ENCODE measurements at regions of chr13 and their contacts with region 1.

Region 1: GRCh38 chr13:47555235-47555634 is 445.8 kb downstream of the SUCLA2 start:
- DNase-seq: no peak
- ATAC-seq: no peak
- H3K4me3 ChIP-seq: no peak overlapping the region
- H3K27ac ChIP-seq: no peak overlapping the region
- H3K4me1 ChIP-seq: no peaks in the 10 kb centered on the region
- H3K27me3 ChIP-seq: no peaks in the 10 kb centered on the region
- CTCF ChIP-seq: no peak
- POLR2A ChIP-seq: no peak

Region 2: DNA sequence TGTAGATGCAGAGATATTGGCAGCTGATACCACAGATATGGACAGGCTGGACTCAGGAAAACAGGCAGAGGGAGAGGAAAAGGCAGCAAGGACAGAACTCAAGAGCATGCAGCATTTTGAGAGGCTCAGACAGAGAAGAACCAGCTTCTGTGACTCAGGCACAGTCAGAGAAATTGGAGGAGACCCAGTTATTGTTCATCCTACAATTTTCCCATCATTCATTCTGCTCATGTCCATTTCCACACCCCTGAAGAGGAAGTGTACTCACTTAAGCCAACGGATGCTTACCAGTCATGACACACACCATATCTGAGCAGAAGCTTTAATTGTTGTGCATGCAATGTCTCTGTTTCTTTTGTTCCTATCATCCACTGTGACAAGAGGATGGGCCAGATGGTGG is 298.6 kb before region 1 on chr13:
- in situ Hi-C with region 1: no loop called
- intact Hi-C with region 1: no loop called
- DNase-seq: no peak
- ATAC-seq: no peak
- H3K4me3 ChIP-seq: no peak overlapping the region
- H3K27ac ChIP-seq: no peak overlapping the region
- H3K4me1 ChIP-seq: no peaks in the 10 kb centered on the region
- H3K27me3 ChIP-seq: no peaks in the 10 kb centered on the region
- CTCF ChIP-seq: no peak
- POLR2A ChIP-seq: no peak

Region 3: DNA sequence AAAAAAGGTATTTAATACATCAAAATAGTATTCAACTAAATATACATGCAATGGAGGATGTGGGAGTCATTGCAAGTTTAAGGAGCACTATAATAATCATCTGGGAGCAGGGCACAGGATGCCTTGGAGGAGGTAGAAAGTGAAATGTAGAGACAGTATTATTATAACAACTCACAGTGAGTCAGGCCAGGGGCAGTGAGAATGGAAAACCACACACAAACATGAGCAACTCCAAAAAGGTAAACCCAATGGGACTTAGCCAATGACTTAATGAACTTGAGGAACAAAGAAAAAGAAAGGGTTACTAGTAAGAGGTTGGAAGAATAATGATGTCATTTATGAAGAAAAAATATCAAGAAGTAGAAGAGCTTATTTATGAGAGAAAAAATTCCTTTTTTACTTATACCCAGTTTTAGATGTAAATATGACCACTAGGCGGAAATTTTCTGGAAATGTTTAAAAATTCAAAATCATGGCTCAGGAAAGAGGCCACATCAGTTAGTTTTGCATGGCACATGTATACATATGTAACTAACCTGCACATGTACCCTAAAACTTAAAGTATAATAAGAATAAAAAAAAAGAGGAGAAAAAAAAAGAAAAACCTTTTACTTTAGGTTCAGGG is 56.5 kb after region 1 on chr13:
- in situ Hi-C with region 1: no loop called
- intact Hi-C with region 1: loop called (anchors 2 kb)
- DNase-seq: no peak
- ATAC-seq: no peak
- H3K4me3 ChIP-seq: no peak overlapping the region
- H3K27ac ChIP-seq: no peak overlapping the region
- H3K4me1 ChIP-seq: no peaks in the 10 kb centered on the region
- H3K27me3 ChIP-seq: no peaks in the 10 kb centered on the region
- CTCF ChIP-seq: no peak
- POLR2A ChIP-seq: no peak

Region 4: DNA sequence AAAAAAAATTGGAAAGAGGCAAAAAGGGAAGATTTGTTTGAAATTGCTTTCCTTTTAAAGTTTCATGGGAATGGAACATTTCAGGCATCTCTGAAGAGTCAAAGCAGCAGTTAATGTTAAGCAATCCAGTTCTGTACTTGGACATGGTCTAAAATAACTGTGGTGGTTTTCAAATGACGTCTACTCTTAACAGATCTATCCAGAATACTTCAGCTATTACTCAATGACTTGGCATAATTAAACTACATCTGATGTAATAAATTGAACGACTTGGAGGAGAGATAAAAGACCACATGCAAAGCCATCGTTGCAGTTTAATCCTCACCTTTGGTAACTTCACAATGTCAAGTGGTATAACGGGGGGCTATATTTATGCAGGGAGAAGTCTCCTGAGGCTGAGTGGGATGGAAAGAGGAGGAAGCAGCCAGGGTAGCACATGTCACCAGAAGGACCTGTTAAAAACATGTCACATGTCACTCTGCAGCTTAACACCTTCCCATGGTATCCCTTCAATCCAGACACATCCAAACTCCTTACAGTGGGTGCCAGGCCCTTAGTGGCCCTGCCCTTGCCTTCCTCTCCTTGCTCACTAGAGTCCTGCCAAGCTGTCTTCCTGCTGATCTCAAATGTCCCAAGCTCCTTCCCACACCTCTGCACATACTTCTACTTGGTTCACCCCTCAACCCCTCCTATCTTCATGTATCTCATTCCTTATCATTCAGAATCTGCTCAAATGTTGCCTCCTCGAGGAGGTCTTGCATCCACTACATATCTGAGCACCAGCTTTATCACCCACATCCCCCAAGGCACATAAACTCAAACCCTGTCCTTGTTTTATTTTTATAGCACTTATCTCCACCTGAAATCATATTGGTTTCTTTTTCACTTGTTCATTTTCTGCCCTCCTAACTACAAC is 118.0 kb after region 1 on chr13:
- in situ Hi-C with region 1: loop called in 1 of 4 experiments (anchors 25 kb)
- intact Hi-C with region 1: no loop called
- DNase-seq: peak; percentile 2 to 31
- ATAC-seq: peak; percentile 90 to 94
- H3K4me3 ChIP-seq: no peak overlapping the region
- H3K27ac ChIP-seq: peak overlapping the region in 3 of 4 donors; percentile 41 to 77 (median 74)
- H3K4me1 ChIP-seq: peaks cover 21 to 24% of the 10 kb centered on the region in 2 donors
- H3K27me3 ChIP-seq: no peaks in the 10 kb centered on the region
- CTCF ChIP-seq: no peak
- POLR2A ChIP-seq: no peak

Measured in gastrocnemius medialis (tissue), 4 donors.